PC-9 (cell line): ENCODE measurements at regions of chr10 and their contacts with region 1.

Region 1: DNA sequence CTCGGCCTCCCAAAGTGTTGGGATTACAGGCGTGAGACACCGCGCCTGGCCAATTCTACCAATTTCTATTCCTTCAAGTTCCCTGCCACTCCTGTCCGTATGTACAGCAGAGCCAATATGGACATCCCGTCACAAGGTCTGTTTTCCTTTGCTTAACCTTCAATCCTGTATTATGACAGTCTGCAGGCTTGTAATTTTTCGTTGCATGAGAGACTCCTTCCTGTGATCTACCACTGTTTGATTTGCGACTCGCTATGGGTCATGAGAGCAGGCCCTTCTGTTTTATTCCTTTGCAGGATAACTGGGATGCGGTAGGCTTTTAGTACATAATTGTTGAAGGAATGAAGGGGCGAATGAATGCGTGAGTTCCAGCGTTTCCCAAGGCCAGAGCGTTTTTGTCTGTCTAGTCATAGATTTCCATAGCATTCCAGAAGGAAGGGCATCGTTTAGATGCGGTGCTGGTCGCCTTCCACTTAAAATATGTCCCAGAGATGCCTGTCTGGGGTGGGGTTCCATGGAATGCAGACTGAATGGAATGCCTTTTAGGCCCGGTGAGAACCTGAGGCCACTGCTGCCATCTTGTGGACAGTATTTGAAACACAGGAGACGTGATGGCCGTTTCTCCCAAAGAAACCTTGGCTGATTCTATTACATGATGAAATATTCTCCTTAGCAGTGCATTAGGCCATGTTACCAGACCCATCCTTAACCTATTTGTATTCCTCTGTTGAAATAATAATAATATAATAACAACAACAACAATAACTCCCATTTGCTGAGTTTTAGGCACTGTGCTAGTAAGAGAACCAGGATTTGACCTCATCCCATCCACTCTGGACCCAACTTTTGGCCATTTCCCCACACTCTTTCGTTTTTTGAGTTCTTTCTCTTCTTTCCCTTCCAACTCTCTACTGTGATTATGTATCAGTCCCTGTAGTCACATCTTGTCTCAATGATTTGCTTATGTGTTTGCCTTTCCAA is 193.2 kb downstream of the MYOF start:
- DNase-seq: peak; percentile 77 to 84
- H3K4me3 ChIP-seq: no peak overlapping the region
- H3K27ac ChIP-seq: peak overlapping the region; percentile 66
- H3K4me1 ChIP-seq: peaks cover 5% of the 10 kb centered on the region
- H3K27me3 ChIP-seq: no peaks in the 10 kb centered on the region
- CTCF ChIP-seq: peak; percentile 76

Region 2: GRCh38 chr10:92699518-92700381 is 589.2 kb before region 1 on chr10:
- CTCF ChIA-PET with region 1: no interaction called
- POLR2A ChIA-PET with region 1: no interaction called
- intact Hi-C with region 1: no loop called
- DNase-seq: peak in 1 of 2 experiments; percentile 10
- H3K4me3 ChIP-seq: peak overlapping the region; percentile 48; the same call in 1 of the 2 replicates
- H3K27ac ChIP-seq: no peak overlapping the region
- H3K4me1 ChIP-seq: no peaks in the 10 kb centered on the region
- H3K27me3 ChIP-seq: no peaks in the 10 kb centered on the region
- CTCF ChIP-seq: no peak

Region 3: GRCh38 chr10:93006435-93007039 is 282.4 kb before region 1 on chr10:
- CTCF ChIA-PET with region 1: no interaction called
- POLR2A ChIA-PET with region 1: no interaction called
- intact Hi-C with region 1: loop called (anchors 1 kb)
- DNase-seq: peak in 1 of 2 experiments; percentile 39
- H3K4me3 ChIP-seq: no peak overlapping the region
- H3K27ac ChIP-seq: no peak overlapping the region
- H3K4me1 ChIP-seq: no peaks in the 10 kb centered on the region
- H3K27me3 ChIP-seq: no peaks in the 10 kb centered on the region
- CTCF ChIP-seq: peak; percentile 57

Region 4: DNA sequence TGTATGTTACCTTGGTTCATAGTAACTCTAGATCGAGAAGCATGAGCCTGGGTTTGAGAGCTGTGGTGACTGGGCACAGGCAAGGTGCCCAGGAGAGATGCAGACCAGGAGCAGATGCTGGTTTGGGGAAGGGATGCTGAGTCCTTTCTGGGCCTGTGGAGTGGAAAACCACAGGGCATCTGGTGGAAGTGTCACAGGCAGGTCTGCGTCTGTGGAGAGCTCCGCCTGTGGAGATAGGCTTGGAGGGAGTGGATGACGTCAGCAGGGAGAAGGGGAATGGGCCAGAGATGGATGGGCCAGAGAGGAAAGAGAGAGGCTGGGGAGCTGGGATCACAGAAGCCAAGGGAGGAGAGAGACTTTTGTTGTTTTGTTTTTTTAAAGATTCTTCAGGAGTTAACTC is 200.5 kb before region 1 on chr10:
- CTCF ChIA-PET with region 1: interaction called, 18 read pairs
- POLR2A ChIA-PET with region 1: interaction called, 21 read pairs
- intact Hi-C with region 1: no loop called
- DNase-seq: no peak
- H3K4me3 ChIP-seq: no peak overlapping the region
- H3K27ac ChIP-seq: no peak overlapping the region
- H3K4me1 ChIP-seq: no peaks in the 10 kb centered on the region; the same call in 1 of the 2 replicates
- H3K27me3 ChIP-seq: no peaks in the 10 kb centered on the region
- CTCF ChIP-seq: no peak

Region 5: GRCh38 chr10:93115661-93116383 is 173.1 kb before region 1 on chr10:
- CTCF ChIA-PET with region 1: interaction called, 3 read pairs
- POLR2A ChIA-PET with region 1: no interaction called
- intact Hi-C with region 1: loop called (anchors 1 kb)
- DNase-seq: peak in 1 of 2 experiments; percentile 53
- H3K4me3 ChIP-seq: no peak overlapping the region
- H3K27ac ChIP-seq: no peak overlapping the region
- H3K4me1 ChIP-seq: no peaks in the 10 kb centered on the region
- H3K27me3 ChIP-seq: no peaks in the 10 kb centered on the region
- CTCF ChIP-seq: peak; percentile 64